MCF 10A (cell line): ENCODE measurements at regions of chr7 and their contacts with region 1.

Region 1: DNA sequence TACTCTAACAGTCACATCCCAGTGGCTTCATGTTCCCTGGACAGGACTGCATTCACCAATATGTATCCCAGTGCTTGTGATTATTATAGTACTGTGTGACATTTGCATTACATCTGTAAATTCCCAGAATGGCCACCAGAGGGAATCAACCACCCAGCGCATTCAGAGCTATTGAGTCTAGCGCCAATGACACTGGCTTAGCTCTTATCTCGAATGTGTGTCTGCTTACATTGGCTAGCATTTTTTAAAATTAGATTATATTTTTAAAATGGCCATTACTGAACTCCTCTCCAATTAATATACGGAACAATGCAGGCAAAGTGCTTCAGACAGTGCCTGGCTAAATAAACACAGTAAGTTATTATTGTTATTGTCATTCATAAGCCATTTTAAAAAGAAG is 36.3 kb downstream of the TRIL start:
- DNase-seq: peak; percentile 74
- H3K4me3 Mint-ChIP-seq: no peak overlapping the region
- H3K27ac Mint-ChIP-seq: no peak overlapping the region
- H3K4me1 Mint-ChIP-seq: peaks cover 7% of the 10 kb centered on the region
- H3K27me3 Mint-ChIP-seq: no peaks in the 10 kb centered on the region
- CTCF ChIP-seq: peak; percentile 81

Region 2: GRCh38 chr7:28605427-28606085 is 316.3 kb before region 1 on chr7:
- CTCF ChIA-PET with region 1: no interaction called
- POLR2A ChIA-PET with region 1: no interaction called
- intact Hi-C with region 1: no loop called
- DNase-seq: no peak
- H3K4me3 Mint-ChIP-seq: no peak overlapping the region
- H3K27ac Mint-ChIP-seq: no peak overlapping the region
- H3K4me1 Mint-ChIP-seq: peaks cover 7% of the 10 kb centered on the region
- H3K27me3 Mint-ChIP-seq: no peaks in the 10 kb centered on the region
- CTCF ChIP-seq: no peak

Region 3: DNA sequence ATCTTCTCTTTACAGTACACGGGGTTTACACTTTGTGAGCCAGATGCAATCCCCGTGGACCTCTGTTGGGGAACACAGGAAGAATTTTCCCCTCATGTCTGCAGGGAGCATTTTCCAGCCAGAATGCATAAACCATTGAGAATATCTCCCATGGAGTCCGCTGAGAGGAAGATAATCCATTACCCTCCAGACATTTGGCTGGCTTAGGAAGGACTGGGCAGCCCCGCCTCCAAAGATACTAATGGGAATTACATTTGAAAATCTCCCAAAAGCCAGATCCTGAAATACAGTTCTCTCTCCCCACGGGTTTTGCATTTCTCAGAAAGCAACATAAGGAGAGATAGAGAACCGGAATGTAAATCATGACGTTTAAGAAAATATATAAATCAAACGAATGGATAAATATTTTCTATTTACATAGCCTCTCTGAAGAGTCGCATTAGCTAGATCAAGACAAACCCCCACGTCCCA is 17.2 kb before region 1 on chr7:
- CTCF ChIA-PET with region 1: interaction called, 41 read pairs
- POLR2A ChIA-PET with region 1: interaction called, 8 read pairs
- intact Hi-C with region 1: no loop called
- DNase-seq: no peak
- H3K4me3 Mint-ChIP-seq: peak overlapping the region; percentile 26
- H3K27ac Mint-ChIP-seq: no peak overlapping the region
- H3K4me1 Mint-ChIP-seq: peaks cover 9% of the 10 kb centered on the region
- H3K27me3 Mint-ChIP-seq: no peaks in the 10 kb centered on the region
- CTCF ChIP-seq: no peak

Region 4: GRCh38 chr7:29099891-29100847 is 178.3 kb after region 1 on chr7:
- CTCF ChIA-PET with region 1: interaction called, 712 read pairs
- POLR2A ChIA-PET with region 1: interaction called, 11 read pairs
- intact Hi-C with region 1: loop called (anchors 1 kb)
- DNase-seq: no peak
- H3K4me3 Mint-ChIP-seq: no peak overlapping the region
- H3K27ac Mint-ChIP-seq: no peak overlapping the region
- H3K4me1 Mint-ChIP-seq: peaks cover 22% of the 10 kb centered on the region
- H3K27me3 Mint-ChIP-seq: no peaks in the 10 kb centered on the region
- CTCF ChIP-seq: no peak

Region 5: DNA sequence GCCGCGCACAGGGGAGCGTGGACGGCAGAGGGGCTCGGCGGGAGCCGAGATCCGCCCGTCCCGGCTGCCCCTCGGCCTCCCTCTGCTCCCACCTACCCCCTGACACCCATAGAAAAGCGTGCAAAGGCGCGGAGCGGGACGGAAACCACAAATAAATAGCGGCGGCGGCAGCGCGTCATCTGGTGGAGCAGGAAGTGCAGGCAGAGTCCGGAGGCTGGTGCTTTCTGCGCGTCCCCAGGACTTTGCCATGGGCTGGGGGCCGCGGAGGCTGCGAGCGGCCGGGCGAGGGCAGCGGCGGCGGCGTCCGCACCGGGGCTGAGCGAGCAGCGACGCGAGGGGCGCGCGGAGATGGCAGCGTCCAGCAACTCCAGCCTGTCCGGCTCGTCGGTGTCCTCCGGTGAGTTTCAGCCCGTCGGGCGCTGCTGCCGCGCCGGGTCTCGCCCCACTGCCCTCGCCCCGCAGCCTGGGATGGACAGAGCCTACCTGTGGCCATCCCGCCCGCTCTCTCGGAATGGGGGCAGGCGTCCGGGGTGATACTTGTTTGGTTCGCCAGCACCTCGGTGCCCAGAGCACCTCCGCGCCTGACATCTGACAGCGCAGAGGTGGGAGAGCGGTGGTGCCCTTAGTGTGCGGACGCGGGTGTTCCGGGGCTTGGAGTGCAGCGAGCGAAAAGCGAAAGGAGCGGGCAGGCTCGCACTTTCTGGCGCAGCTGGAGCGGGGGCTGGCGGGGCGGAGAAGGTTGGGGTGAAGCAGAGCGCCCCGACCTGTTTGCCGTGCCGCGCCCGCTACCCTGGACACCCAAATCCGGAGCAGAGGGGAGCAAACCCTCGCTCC is 273.0 kb after region 1 on chr7 and contains the start of gene CHN2:
- CTCF ChIA-PET with region 1: interaction called, 97 read pairs
- POLR2A ChIA-PET with region 1: interaction called, 4 read pairs
- intact Hi-C with region 1: loop called (anchors 2 kb)
- DNase-seq: peak; percentile 55
- H3K4me3 Mint-ChIP-seq: peak within 1 kb of the TSS; percentile 75
- H3K27ac Mint-ChIP-seq: no peak within 1 kb of the TSS
- H3K4me1 Mint-ChIP-seq: no peaks in the 10 kb centered on the region
- H3K27me3 Mint-ChIP-seq: no peaks in the 10 kb centered on the region
- CTCF ChIP-seq: no peak
- total RNA-seq, gene CHN2: 5.1 and 8.0 TPM in 2 replicates

Region 6: GRCh38 chr7:29217113-29217512 is 295.3 kb after region 1 on chr7:
- CTCF ChIA-PET with region 1: no interaction called
- POLR2A ChIA-PET with region 1: no interaction called
- intact Hi-C with region 1: no loop called
- DNase-seq: no peak
- H3K4me3 Mint-ChIP-seq: no peak overlapping the region
- H3K27ac Mint-ChIP-seq: no peak overlapping the region
- H3K4me1 Mint-ChIP-seq: peaks cover 8% of the 10 kb centered on the region
- H3K27me3 Mint-ChIP-seq: no peaks in the 10 kb centered on the region
- CTCF ChIP-seq: no peak

Region 7: GRCh38 chr7:29397398-29397797 is 475.6 kb after region 1 on chr7:
- CTCF ChIA-PET with region 1: interaction called, 13 read pairs
- POLR2A ChIA-PET with region 1: no interaction called
- intact Hi-C with region 1: no loop called
- DNase-seq: no peak
- H3K4me3 Mint-ChIP-seq: no peak overlapping the region
- H3K27ac Mint-ChIP-seq: no peak overlapping the region
- H3K4me1 Mint-ChIP-seq: no peaks in the 10 kb centered on the region
- H3K27me3 Mint-ChIP-seq: no peaks in the 10 kb centered on the region
- CTCF ChIP-seq: no peak

Region 8: GRCh38 chr7:29574659-29575058 is 652.8 kb after region 1 on chr7:
- CTCF ChIA-PET with region 1: no interaction called
- POLR2A ChIA-PET with region 1: no interaction called
- intact Hi-C with region 1: no loop called
- DNase-seq: no peak
- H3K4me3 Mint-ChIP-seq: no peak overlapping the region
- H3K27ac Mint-ChIP-seq: no peak overlapping the region
- H3K4me1 Mint-ChIP-seq: peaks cover 5% of the 10 kb centered on the region
- H3K27me3 Mint-ChIP-seq: no peaks in the 10 kb centered on the region
- CTCF ChIP-seq: no peak

Region 9: DNA sequence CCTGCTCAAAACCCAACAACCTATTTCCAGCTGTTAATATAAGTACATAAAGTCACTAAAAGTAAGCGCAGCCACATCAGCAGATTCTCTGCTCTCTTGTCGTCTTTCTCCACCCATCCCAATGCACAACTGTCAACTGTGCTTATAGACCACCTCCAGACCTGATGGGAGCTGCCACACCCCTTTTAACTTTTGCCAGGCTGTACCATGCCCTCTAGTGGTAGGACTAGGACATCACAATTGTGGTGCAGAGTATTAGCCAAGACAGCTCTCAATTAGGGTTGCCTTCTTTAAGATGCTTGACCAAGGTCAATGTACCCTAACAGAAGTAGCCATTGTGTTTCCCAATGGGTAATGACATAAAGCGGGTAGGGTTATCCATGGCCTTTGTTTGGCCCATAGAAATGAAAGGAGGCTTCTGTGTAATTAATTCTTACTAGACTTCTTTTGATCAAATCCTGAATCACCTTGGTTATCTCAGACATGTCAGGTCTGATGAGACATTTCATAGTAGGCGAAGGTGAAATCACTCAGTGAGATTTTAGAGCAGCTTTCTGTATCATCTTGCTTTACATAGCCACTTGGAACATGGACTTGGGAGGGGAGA is 999.7 kb after region 1 on chr7:
- CTCF ChIA-PET with region 1: interaction called, 5 read pairs
- POLR2A ChIA-PET with region 1: no interaction called
- intact Hi-C with region 1: loop called (anchors 5 kb)
- DNase-seq: peak; percentile 75
- H3K4me3 Mint-ChIP-seq: no peak overlapping the region
- H3K27ac Mint-ChIP-seq: no peak overlapping the region
- H3K4me1 Mint-ChIP-seq: peaks cover 3% of the 10 kb centered on the region
- H3K27me3 Mint-ChIP-seq: peaks cover 28% of the 10 kb centered on the region
- CTCF ChIP-seq: peak; percentile 82